HCT116 (cell line): ENCODE measurements at regions of chr11 and their contacts with region 1.

Region 1: GRCh38 chr11:86802601-86803051 is 2.3 kb downstream of the PRSS23 start:
- DNase-seq: peak; percentile 53
- ATAC-seq: peak; percentile 66
- H3K4me3 ChIP-seq: no peak overlapping the region
- H3K27ac ChIP-seq: no peak overlapping the region
- H3K4me1 ChIP-seq: peaks cover 3 to 37% of the 10 kb centered on the region in 2 experiments
- H3K27me3 ChIP-seq: peaks cover 7% of the 10 kb centered on the region
- CTCF ChIP-seq: peak; percentile 52 to 66 (median 59); a peak in 5 of 6 replicates
- POLR2A ChIP-seq: no peak
- RAD21 ChIP-seq: peak; percentile 54

Region 2: DNA sequence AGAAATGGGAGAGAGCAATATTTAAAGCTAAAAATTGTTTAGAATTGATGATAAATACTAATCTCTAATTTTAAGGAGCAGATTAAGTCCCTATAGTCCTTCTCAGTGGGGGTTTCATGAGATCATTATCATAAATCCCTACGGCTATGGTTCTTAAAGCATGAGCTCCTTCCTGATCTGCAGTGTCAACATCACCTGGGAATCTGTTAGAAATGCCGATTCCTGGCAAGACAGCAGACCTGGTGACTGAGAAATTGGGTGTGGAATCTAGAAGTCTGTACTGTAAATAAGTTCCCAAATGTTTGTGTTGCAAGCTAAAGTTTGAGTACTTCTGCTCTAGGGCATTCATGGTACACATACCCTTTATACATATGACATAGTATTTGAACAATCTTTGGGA is 488.0 kb before region 1 on chr11:
- CTCF ChIA-PET with region 1: no interaction called
- POLR2A ChIA-PET with region 1: no interaction called
- RAD21 ChIA-PET with region 1: no interaction called
- intact Hi-C with region 1: no loop called
- DNase-seq: no peak
- ATAC-seq: no peak
- H3K4me3 ChIP-seq: no peak overlapping the region
- H3K27ac ChIP-seq: no peak overlapping the region
- H3K4me1 ChIP-seq: no peaks in the 10 kb centered on the region
- H3K27me3 ChIP-seq: no peaks in the 10 kb centered on the region
- CTCF ChIP-seq: no peak
- POLR2A ChIP-seq: no peak
- RAD21 ChIP-seq: no peak

Region 3: GRCh38 chr11:86676548-86677154 is 126.0 kb before region 1 on chr11:
- CTCF ChIA-PET with region 1: no interaction called
- POLR2A ChIA-PET with region 1: no interaction called
- RAD21 ChIA-PET with region 1: no interaction called
- intact Hi-C with region 1: loop called (anchors 5 kb)
- DNase-seq: peak; percentile 33
- ATAC-seq: peak; percentile 73
- H3K4me3 ChIP-seq: no peak overlapping the region
- H3K27ac ChIP-seq: no peak overlapping the region
- H3K4me1 ChIP-seq: peaks cover 0 to 3% of the 10 kb centered on the region in 2 experiments; a peak in 3 of 4 replicates
- H3K27me3 ChIP-seq: no peaks in the 10 kb centered on the region
- CTCF ChIP-seq: peak; percentile 45 to 67 (median 63); a peak in 5 of 6 replicates
- POLR2A ChIP-seq: no peak
- RAD21 ChIP-seq: peak; percentile 62

Region 4: DNA sequence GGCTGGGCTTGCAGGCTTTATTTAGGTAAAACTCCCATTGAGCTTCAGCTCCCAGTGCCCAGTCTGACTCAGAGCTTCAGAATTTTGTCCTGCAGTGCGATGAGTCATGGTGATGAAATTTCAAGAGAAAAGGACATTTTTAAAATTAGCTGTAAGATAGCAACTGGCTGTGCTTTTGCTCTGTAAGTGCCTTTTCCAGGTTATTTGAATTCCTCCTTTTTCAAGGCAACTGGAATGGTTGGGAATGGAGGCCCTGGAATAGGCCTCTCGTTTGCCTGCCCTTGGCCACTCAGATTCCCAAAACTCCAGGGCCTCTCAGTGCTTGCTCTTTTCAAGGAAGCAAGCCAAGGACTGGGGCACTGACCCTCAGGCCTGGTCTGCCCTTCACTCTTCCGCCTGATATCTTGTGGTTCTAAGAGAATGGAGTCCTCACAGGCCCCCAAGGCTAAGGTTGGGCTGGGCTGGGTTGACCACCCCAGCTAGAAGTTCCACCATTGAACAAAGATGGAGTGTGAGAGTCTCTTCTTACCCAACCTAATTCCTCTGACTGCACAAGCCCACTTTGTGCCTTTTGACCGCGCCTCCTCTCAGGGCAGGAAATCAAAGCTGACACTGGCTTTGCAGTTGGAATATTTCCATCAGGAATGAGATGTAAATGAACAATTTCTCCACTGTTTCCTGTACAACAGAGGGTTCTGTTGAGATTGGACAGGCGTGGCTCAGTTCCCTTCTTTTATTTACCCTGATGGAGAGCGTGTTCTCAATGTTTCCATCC is 61.7 kb before region 1 on chr11:
- CTCF ChIA-PET with region 1: no interaction called
- POLR2A ChIA-PET with region 1: no interaction called
- RAD21 ChIA-PET with region 1: no interaction called
- intact Hi-C with region 1: loop called (anchors 5 kb)
- DNase-seq: peak; percentile 89
- ATAC-seq: peak; percentile 56
- H3K4me3 ChIP-seq: peak overlapping the region in 1 of 2 experiments; percentile 37; a peak in 2 of 4 replicates
- H3K27ac ChIP-seq: peak overlapping the region; percentile 87
- H3K4me1 ChIP-seq: peaks cover 60 to 77% of the 10 kb centered on the region in 2 experiments
- H3K27me3 ChIP-seq: no peaks in the 10 kb centered on the region
- CTCF ChIP-seq: no peak
- POLR2A ChIP-seq: no peak
- RAD21 ChIP-seq: no peak